Caco-2 (cell line): ENCODE measurements at regions of chr3 and their contacts with region 1.

Region 1: DNA sequence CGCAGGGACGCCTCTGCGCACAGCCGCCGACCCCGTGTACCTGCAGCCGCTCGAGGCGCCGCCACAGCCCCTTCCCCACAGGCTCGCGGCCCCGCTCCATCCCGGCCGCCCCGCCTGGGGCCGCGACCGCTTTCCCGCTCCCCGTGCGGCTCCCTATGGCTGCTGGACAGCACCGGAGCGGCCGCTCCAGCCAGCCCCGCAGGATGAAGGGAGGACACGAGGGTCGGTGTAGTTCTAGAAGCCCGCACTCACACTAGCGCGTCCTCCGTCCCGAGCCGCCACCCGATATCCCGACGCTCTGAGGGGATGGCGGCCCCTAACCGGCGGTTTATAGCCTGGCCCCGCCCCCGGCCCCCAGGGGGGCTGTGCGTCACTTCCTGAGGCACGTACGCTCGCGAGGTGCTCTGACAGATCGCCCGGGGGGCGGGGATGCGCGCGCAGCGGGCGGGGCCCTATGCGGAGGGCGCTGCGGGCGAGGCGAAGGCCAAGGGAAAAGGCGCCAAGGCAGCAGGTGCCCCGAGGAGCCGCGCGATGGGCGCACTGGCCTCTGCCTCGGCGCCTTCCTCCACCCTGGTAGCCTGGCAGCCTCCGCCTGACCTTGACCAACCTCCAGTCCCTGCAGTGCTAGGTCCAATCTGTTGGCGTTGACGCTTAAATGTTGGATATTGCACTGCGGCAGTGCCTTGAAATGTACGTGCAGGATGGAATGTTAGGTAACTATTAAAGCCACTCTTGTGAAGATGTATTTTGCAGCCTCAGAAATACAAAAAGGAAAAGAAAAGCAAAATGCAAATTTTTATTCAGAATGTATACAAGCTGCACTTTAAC is at the start of gene TFRC:
- DNase-seq: peak; percentile 95 to 96
- H3K4me3 ChIP-seq: peak within 1 kb of the TSS; percentile 82
- H3K4me3 Mint-ChIP-seq: peak within 1 kb of the TSS; percentile 99
- H3K27ac Mint-ChIP-seq: peak within 1 kb of the TSS; percentile 95
- H3K4me1 ChIP-seq: peaks cover 19% of the 10 kb centered on the region
- H3K4me1 Mint-ChIP-seq: peaks cover 7% of the 10 kb centered on the region
- H3K27me3 ChIP-seq: no peaks in the 10 kb centered on the region
- H3K27me3 Mint-ChIP-seq: no peaks in the 10 kb centered on the region
- CTCF ChIP-seq: no peak
- total RNA-seq, gene TFRC: 267 and 293 TPM in 2 replicates

Region 2: GRCh38 chr3:196120271-196120966 is 38.4 kb after region 1 on chr3:
- CTCF ChIA-PET with region 1: no interaction called
- POLR2A ChIA-PET with region 1: no interaction called
- intact Hi-C with region 1: loop called (anchors 5 kb)
- DNase-seq: no peak
- H3K4me3 ChIP-seq: no peak overlapping the region
- H3K4me3 Mint-ChIP-seq: no peak overlapping the region
- H3K27ac Mint-ChIP-seq: no peak overlapping the region
- H3K4me1 ChIP-seq: peaks cover 32% of the 10 kb centered on the region
- H3K4me1 Mint-ChIP-seq: peaks cover 17% of the 10 kb centered on the region
- H3K27me3 ChIP-seq: no peaks in the 10 kb centered on the region
- H3K27me3 Mint-ChIP-seq: no peaks in the 10 kb centered on the region
- CTCF ChIP-seq: no peak